OCI-LY7 (cell line): ENCODE measurements at regions of chr5 and their contacts with region 1.

Region 1: GRCh38 chr5:134586866-134587524 is 45.6 kb downstream of the SAR1B start:
- DNase-seq: peak; percentile 87
- H3K4me3 ChIP-seq: no peak overlapping the region
- H3K27ac ChIP-seq: no peak overlapping the region
- H3K4me1 ChIP-seq: peaks cover 6% of the 10 kb centered on the region
- CTCF ChIP-seq: peak; percentile 99

Region 2: DNA sequence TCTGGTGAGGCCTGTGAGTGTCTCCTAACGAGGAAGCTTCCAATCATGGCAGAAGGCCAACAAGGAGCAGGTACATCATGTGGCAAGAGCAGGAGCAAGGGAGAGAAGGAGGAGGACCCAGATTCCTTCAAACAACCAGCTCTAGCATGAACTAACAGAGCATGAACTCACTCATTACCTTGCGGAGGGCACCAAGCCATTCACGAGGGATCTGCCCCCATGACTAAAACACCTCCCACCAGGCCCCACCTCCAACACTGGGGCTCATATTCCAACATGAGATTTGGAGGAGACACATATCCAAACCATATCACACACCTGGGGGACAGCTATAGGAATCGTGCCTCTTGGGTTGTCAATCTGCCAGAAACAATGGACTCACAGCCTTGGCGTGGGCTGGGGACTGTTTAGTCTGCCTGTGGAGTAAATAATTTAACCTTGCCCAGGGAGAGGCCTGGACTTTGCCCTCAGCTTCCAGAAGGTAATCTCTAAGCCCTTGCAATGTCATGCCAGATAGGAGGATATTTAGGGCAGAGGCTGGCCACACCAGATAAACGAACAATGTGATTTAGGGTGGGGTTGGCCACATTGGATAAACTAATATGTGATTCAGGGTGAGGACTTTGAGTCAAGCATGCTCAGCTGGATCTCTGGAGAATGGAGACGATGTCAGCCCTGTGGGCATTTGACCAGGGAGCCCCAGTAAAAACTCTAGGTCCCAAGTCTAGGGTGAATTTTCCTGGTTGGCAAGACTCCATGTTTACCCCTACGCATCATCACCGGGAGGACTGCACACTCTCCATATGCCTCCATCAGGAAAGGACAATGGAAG is 568.6 kb before region 1 on chr5:
- CTCF ChIA-PET with region 1: no interaction called
- POLR2A ChIA-PET with region 1: no interaction called
- intact Hi-C with region 1: no loop called
- DNase-seq: no peak
- H3K4me3 ChIP-seq: no peak overlapping the region
- H3K27ac ChIP-seq: no peak overlapping the region
- H3K4me1 ChIP-seq: no peaks in the 10 kb centered on the region
- CTCF ChIP-seq: no peak

Region 3: GRCh38 chr5:134184155-134185135 is 402.6 kb before region 1 on chr5:
- CTCF ChIA-PET with region 1: no interaction called
- POLR2A ChIA-PET with region 1: no interaction called
- intact Hi-C with region 1: loop called (anchors 5 kb)
- DNase-seq: peak; percentile 76
- H3K4me3 ChIP-seq: no peak overlapping the region
- H3K27ac ChIP-seq: no peak overlapping the region
- H3K4me1 ChIP-seq: no peaks in the 10 kb centered on the region
- CTCF ChIP-seq: peak; percentile 88

Region 4: GRCh38 chr5:134304311-134304710 is 282.7 kb before region 1 on chr5:
- CTCF ChIA-PET with region 1: interaction called, 18 read pairs
- POLR2A ChIA-PET with region 1: interaction called, 4 read pairs
- intact Hi-C with region 1: loop called (anchors 1 kb)
- DNase-seq: no peak
- H3K4me3 ChIP-seq: no peak overlapping the region
- H3K27ac ChIP-seq: no peak overlapping the region
- H3K4me1 ChIP-seq: no peaks in the 10 kb centered on the region
- CTCF ChIP-seq: no peak

Region 5: GRCh38 chr5:134370871-134371833 is 215.8 kb before region 1 on chr5 and contains the start of gene UBE2B:
- CTCF ChIA-PET with region 1: interaction called, 3 read pairs
- POLR2A ChIA-PET with region 1: interaction called, 3 read pairs
- intact Hi-C with region 1: loop called (anchors 2 kb)
- DNase-seq: peak; percentile 100
- H3K4me3 ChIP-seq: peak within 1 kb of the TSS; percentile 80
- H3K27ac ChIP-seq: peak within 1 kb of the TSS; percentile 62
- H3K4me1 ChIP-seq: peaks cover 25% of the 10 kb centered on the region
- CTCF ChIP-seq: no peak
- total RNA-seq, gene UBE2B: 7.6 and 26.4 TPM in 2 replicates

Region 6: DNA sequence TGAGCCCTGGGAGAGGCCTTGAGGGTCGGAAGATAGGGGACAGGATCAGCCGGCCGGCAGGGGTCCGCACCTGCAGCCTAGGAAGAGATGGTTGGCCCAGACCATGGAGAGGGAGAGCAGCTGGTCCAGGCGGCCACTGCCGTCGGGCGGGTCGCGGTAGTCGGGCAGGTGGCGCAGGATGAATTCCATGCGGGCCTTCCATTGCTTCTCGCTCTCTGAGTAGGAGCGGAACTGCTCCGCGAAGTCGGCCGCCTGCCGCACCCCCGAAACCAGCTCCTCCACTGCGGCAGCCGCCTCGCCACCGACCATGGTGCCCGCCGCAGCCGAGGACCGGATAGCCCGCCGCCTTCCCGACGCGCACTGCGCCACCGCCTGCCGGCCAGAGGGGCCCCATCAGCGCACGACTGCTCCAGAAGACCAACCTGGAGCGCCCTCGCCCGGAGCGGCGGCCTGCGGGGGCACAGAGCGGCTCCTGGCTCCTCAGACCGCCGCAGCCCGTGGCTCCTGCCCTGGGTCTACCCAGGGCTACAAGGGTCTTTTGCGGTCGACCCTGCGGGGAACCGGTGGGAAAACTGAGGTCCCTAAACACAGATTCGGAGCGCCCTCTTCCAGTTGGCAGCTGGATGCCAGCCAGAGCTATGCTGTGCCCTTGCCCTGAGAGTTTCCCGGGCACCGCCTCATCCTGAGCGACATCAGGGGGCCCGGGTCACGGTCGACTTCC is 175.3 kb before region 1 on chr5 and contains the start of gene CDKN2AIPNL:
- CTCF ChIA-PET with region 1: interaction called, 4 read pairs
- POLR2A ChIA-PET with region 1: interaction called, 5 read pairs
- intact Hi-C with region 1: loop called (anchors 2 kb)
- DNase-seq: peak; percentile 91
- H3K4me3 ChIP-seq: peak within 1 kb of the TSS; percentile 100
- H3K27ac ChIP-seq: peak within 1 kb of the TSS; percentile 27
- H3K4me1 ChIP-seq: peaks cover 26% of the 10 kb centered on the region
- CTCF ChIP-seq: peak; percentile 79
- total RNA-seq, gene CDKN2AIPNL: 40.5 and 47.8 TPM in 2 replicates

Region 7: DNA sequence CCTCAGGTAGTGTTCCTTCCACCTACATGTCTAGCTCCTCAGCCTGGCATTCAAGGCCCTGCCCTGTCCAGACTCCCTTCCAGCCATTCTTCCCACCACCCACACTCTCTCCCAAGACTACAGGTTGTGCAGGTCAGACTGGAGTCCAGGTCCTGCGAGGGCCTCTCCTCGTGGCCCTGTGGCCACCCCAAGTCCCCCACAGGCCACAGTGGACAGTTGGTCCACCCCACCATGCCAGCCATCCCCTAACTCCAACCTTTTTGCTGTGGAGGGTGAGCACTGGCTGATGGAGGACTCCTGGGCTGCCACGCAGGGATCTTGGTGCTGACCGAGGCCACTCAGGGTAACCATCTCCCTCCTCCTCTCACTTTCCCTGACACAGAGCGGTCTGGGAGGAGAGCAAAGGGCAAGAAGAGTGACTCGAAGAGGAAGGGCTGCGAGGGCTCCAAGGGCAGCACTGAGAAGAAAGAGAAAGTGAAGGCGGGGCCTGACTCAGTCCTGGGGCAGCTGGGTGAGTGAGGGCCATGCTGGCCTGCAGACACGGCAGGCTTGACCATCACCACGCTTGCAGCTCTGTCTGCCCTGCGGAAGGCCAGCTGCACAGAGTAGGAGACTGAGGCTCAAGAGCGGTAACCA is 10.5 kb before region 1 on chr5:
- CTCF ChIA-PET with region 1: no interaction called
- POLR2A ChIA-PET with region 1: no interaction called
- intact Hi-C with region 1: no loop called
- DNase-seq: no peak
- H3K4me3 ChIP-seq: no peak overlapping the region
- H3K27ac ChIP-seq: no peak overlapping the region
- H3K4me1 ChIP-seq: no peaks in the 10 kb centered on the region
- CTCF ChIP-seq: no peak